Heart left ventricle (tissue), 16 donors: ENCODE measurements at regions of chr11 and their contacts with region 1.

Region 1: DNA sequence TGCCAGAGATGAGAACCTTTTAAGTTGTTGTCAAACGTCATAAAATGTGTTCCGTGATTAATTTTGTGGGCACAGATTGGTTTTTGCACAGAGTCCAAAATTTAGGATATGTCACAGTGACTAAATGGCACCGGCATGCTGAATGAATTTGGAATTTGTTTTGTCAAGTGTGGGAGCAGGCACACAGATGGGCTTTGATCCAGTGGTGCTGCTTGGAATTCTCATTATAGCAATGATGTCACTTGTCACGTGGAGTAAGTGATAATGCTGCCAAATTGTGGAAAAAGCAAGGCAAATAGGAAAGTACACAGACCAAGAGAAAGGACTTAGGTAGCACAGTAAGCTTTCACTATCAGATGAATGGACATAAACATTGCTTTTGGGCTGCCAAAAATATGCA is 8.0 kb upstream of the LIN7C start:
- DNase-seq: peak in 4 of 5 donors; percentile 47 to 68 (median 64)
- ATAC-seq: peak; percentile 86 to 89 (median 88)
- H3K4me3 ChIP-seq: no peak overlapping the region
- H3K27ac ChIP-seq: peak overlapping the region; percentile 36 to 84 (median 80)
- H3K4me1 ChIP-seq: peaks cover 0 to 42% (median 11%) of the 10 kb centered on the region in 12 donors
- H3K27me3 ChIP-seq: no peaks in the 10 kb centered on the region
- CTCF ChIP-seq: no peak
- POLR2A ChIP-seq: no peak

Region 2: GRCh38 chr11:27592098-27592780 is 77.7 kb after region 1 on chr11:
- intact Hi-C with region 1: no loop called
- DNase-seq: no peak
- ATAC-seq: no peak
- H3K4me3 ChIP-seq: no peak overlapping the region
- H3K27ac ChIP-seq: no peak overlapping the region
- H3K4me1 ChIP-seq: no peaks in the 10 kb centered on the region
- H3K27me3 ChIP-seq: no peaks in the 10 kb centered on the region
- CTCF ChIP-seq: no peak
- POLR2A ChIP-seq: no peak

Region 3: GRCh38 chr11:27642954-27643353 is 128.4 kb after region 1 on chr11:
- intact Hi-C with region 1: loop called in 1 of 10 experiments (anchors 10 kb)
- DNase-seq: no peak
- ATAC-seq: peak in 1 of 4 donors; percentile 34
- H3K4me3 ChIP-seq: no peak overlapping the region
- H3K27ac ChIP-seq: no peak overlapping the region
- H3K4me1 ChIP-seq: peaks cover 0 to 27% (median 0%) of the 10 kb centered on the region in 12 donors
- H3K27me3 ChIP-seq: no peaks in the 10 kb centered on the region
- CTCF ChIP-seq: peak in 5 of 12 donors; percentile 5 to 19 (median 11)
- POLR2A ChIP-seq: no peak